PC-3 (cell line): ENCODE measurements at regions of chr12 and their contacts with region 1.

Region 1: DNA sequence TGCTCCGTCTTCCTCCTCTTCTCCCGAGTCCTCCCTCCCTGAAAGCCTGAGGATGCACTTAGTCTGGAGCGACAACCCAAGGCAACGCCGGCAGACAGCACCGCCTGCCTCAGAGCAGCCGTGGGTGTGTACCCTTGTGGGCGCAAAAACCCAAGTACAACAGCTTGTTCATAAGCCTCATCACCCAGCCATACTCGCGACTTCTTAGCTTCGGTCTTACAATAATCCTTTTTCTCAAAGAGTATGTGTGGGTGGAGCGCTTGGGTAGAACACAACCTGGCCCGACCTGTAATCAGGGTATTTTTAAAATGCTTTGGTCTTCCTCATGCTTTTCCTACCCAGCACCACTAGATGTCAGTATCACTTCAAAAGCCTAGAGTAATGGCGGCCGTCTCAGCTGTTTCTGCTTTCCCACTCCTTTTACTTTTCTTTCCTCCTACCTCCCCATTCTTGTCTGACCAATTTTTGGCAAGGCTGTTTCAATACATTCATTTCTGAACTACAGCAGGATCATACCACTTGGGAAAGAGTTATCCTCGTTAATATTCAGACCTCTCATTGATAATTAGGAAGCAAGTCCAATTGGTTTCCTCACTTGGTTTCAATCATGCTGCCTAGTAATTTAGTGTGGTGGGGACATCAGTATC is 198.9 kb downstream of the EPS8 start:
- DNase-seq: peak; percentile 74
- ATAC-seq: peak; percentile 62
- H3K4me3 ChIP-seq: peak overlapping the region; percentile 67
- H3K27ac ChIP-seq: peak overlapping the region; percentile 75
- H3K4me1 ChIP-seq: peaks cover 30% of the 10 kb centered on the region
- H3K27me3 ChIP-seq: no peaks in the 10 kb centered on the region
- CTCF ChIP-seq: peak; percentile 85

Region 2: GRCh38 chr12:15644700-15645099 is 54.4 kb after region 1 on chr12:
- CTCF ChIA-PET with region 1: no interaction called
- POLR2A ChIA-PET with region 1: no interaction called
- intact Hi-C with region 1: no loop called
- DNase-seq: peak; percentile 51
- ATAC-seq: peak; percentile 37; the same call in 1 of the 2 replicates
- H3K4me3 ChIP-seq: no peak overlapping the region
- H3K27ac ChIP-seq: 0 out of 2 replicates have a peak overlapping the region, but pooled peaks have one; percentile 39
- H3K4me1 ChIP-seq: peaks cover 17% of the 10 kb centered on the region
- H3K27me3 ChIP-seq: no peaks in the 10 kb centered on the region
- CTCF ChIP-seq: no peak

Region 3: GRCh38 chr12:15782667-15783066 is 192.4 kb after region 1 on chr12:
- CTCF ChIA-PET with region 1: no interaction called
- POLR2A ChIA-PET with region 1: no interaction called
- intact Hi-C with region 1: loop called (anchors 2 kb)
- DNase-seq: no peak
- ATAC-seq: no peak
- H3K4me3 ChIP-seq: no peak overlapping the region
- H3K27ac ChIP-seq: no peak overlapping the region
- H3K4me1 ChIP-seq: peaks cover 48% of the 10 kb centered on the region
- H3K27me3 ChIP-seq: no peaks in the 10 kb centered on the region
- CTCF ChIP-seq: no peak